B cell (primary cell): ENCODE measurements at regions of chr3 and their contacts with region 1.

Region 1: GRCh38 chr3:129383292-129383860 is 45.1 kb downstream of the EFCAB12 start:
- DNase-seq: peak; percentile 61
- ATAC-seq: peak; percentile 93
- H3K4me3 ChIP-seq: no peak overlapping the region
- H3K4me3 Mint-ChIP-seq: no peak overlapping the region
- H3K27ac ChIP-seq: no peak overlapping the region
- H3K27ac Mint-ChIP-seq: no peak overlapping the region
- H3K4me1 ChIP-seq: no peaks in the 10 kb centered on the region
- H3K4me1 Mint-ChIP-seq: no peaks in the 10 kb centered on the region
- H3K27me3 ChIP-seq: no peaks in the 10 kb centered on the region
- H3K27me3 Mint-ChIP-seq: no peaks in the 10 kb centered on the region
- CTCF ChIP-seq: peak; percentile 78

Region 2: GRCh38 chr3:129399145-129399894 is 15.9 kb after region 1 on chr3:
- CTCF ChIA-PET with region 1: interaction called, 13 read pairs
- POLR2A ChIA-PET with region 1: no interaction called
- intact Hi-C with region 1: no loop called
- DNase-seq: peak; percentile 94
- ATAC-seq: peak; percentile 86
- H3K4me3 ChIP-seq: peak overlapping the region; percentile 76 to 99 (median 89)
- H3K4me3 Mint-ChIP-seq: peak overlapping the region; percentile 96
- H3K27ac ChIP-seq: peak overlapping the region; percentile 88 to 95
- H3K27ac Mint-ChIP-seq: peak overlapping the region; percentile 94
- H3K4me1 ChIP-seq: peaks cover 20 to 22% of the 10 kb centered on the region in 2 donors
- H3K4me1 Mint-ChIP-seq: peaks cover 35% of the 10 kb centered on the region
- H3K27me3 ChIP-seq: no peaks in the 10 kb centered on the region
- H3K27me3 Mint-ChIP-seq: no peaks in the 10 kb centered on the region
- CTCF ChIP-seq: peak; percentile 90

Region 3: DNA sequence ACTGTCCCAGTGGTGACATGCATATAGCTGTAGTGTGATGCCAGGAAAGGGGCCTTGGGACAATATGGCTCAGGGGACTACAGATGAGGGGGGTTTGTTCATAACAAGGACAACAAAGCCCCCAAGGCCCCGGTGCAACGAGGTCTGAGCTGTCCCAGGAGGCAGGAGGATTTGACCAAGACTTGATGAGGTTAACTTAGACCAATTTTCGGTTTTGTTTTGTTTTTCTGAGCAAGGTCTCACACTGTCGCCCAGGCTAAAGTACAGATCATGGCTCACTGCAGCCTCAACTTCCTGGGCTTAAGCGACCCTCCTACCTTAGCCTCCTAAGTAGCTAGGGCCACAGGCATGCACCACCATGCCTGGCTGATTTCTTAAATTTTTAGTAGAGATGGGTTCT is 21.2 kb after region 1 on chr3:
- CTCF ChIA-PET with region 1: interaction called, 13 read pairs
- POLR2A ChIA-PET with region 1: no interaction called
- intact Hi-C with region 1: no loop called
- DNase-seq: no peak
- ATAC-seq: no peak
- H3K4me3 ChIP-seq: no peak overlapping the region
- H3K4me3 Mint-ChIP-seq: no peak overlapping the region
- H3K27ac ChIP-seq: no peak overlapping the region
- H3K27ac Mint-ChIP-seq: no peak overlapping the region
- H3K4me1 ChIP-seq: peaks cover 6 to 15% of the 10 kb centered on the region in 2 donors
- H3K4me1 Mint-ChIP-seq: peaks cover 12% of the 10 kb centered on the region
- H3K27me3 ChIP-seq: no peaks in the 10 kb centered on the region
- H3K27me3 Mint-ChIP-seq: no peaks in the 10 kb centered on the region
- CTCF ChIP-seq: no peak

Region 4: DNA sequence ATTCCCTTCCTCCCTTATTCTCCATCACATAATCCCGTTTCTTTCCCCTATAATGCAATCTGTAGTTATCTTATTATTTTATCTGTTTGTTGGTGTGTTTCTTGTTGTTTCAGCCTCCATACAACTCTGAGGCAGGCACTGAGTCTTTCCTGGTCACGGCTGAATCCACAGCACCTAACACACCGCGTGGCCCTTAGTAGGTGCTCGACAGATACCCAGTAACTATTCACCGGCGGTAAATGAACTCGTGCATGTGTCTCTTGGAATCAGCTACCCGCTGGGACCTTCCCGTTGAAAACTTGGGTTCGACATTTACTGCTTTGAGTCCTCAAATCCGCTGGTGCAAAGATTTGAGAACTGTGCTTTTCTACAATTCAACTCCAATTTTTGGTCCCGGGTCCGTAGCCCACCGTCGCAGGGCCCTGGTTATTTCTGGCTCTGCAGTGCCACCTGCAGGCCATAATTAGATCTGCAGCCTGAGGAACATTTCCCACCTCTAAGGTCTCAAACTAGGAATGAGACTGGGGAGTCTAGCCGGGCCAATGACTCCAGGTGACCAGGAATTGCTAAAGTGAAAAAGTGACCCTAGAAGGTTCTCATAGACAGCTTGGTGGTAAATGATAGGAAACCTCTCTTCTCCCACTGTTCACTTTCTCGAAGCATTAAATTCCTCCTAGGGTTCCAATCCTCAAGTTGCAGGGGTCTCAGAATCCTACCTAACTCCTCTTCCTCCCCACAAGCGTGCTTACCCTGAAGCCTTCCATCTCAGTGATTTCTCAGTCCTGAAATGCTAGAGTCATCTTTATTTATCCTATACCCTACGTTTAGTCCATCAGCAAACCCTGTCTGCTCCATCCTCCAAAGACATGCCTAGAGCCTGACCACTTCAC is 551.1 kb after region 1 on chr3:
- CTCF ChIA-PET with region 1: interaction called, 8 read pairs
- POLR2A ChIA-PET with region 1: no interaction called
- intact Hi-C with region 1: loop called (anchors 1 kb)
- DNase-seq: peak; percentile 63
- ATAC-seq: peak; percentile 45
- H3K4me3 ChIP-seq: no peak overlapping the region
- H3K4me3 Mint-ChIP-seq: no peak overlapping the region
- H3K27ac ChIP-seq: no peak overlapping the region
- H3K27ac Mint-ChIP-seq: no peak overlapping the region
- H3K4me1 ChIP-seq: peaks cover 2 to 4% of the 10 kb centered on the region in 2 donors
- H3K4me1 Mint-ChIP-seq: peaks cover 8% of the 10 kb centered on the region
- H3K27me3 ChIP-seq: peaks cover 0 to 5% (median 0%) of the 10 kb centered on the region in 4 experiments
- H3K27me3 Mint-ChIP-seq: peaks cover 7% of the 10 kb centered on the region
- CTCF ChIP-seq: peak; percentile 94